Natural killer cell (primary cell): ENCODE measurements at regions of chr12 and their contacts with region 1.

Region 1: GRCh38 chr12:123995023-123995748 is 22.2 kb downstream of the ZNF664 start:
- DNase-seq: no peak
- ATAC-seq: peak; percentile 89 to 94 (median 89)
- H3K4me3 ChIP-seq: no peak overlapping the region
- H3K4me3 Mint-ChIP-seq: peak overlapping the region; percentile 55
- H3K27ac ChIP-seq: no peak overlapping the region
- H3K27ac Mint-ChIP-seq: peak overlapping the region; percentile 39 to 51
- H3K4me1 ChIP-seq: peaks cover 13% of the 10 kb centered on the region
- H3K4me1 Mint-ChIP-seq: peaks cover 54 to 64% of the 10 kb centered on the region in 2 donors
- H3K27me3 ChIP-seq: no peaks in the 10 kb centered on the region
- H3K27me3 Mint-ChIP-seq: no peaks in the 10 kb centered on the region
- CTCF ChIP-seq: no peak

Region 2: DNA sequence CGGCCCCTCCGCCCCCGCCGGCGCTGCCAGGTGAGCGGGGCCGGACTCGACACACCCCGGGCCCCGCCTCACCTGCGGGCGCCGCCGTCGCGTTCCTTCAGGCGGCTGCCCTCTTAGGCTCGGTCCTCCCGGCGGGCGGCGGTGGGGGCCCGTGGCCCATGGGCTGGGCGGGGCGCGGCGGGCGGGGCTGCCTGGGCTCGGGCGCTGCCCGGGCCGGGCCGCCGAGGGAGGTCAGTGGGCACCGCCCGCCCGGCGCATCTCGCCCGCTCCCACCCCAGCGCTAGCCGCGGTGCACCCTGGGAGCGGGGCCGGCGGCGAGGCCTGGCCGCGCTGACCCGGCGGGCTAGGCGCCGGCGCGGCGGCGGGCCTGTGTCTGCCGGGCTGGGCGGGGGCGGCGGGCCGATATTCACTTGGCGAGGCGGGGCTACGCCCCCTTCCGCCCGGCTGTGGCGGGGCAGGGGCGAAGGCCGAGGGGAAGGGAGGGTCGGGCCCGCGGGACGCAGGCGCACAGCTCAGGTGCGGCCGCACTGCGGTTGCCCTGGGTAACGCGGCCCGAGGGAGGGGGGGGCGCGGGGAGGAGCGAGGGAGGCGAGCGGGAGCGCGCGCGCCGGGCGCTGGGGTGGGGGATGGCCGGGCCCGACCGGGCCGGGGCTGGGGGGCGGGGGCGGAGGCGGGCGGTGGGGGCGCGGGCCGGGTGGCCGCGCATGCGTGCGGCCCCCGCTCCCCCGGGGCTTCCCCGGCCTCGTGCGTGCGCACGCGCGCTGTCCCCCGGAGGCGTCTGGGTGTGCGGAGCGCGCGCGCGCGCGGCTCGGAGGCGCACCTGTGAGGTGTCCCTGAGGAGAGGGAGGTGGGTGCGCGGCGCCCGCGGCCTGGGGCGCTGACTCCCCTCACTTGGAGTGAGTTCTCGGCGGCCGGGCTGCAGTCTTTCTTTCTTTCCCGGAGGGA is 22.5 kb before region 1 on chr12 and contains the starts of genes CCDC92 and ZNF664:
- intact Hi-C with region 1: loop called (anchors 2 kb)
- DNase-seq: peak; percentile 88 to 98
- ATAC-seq: peak; percentile 76 to 89 (median 83)
- H3K4me3 ChIP-seq: peak within 1 kb of the TSS; percentile 60
- H3K4me3 Mint-ChIP-seq: peak within 1 kb of the TSS; percentile 96
- H3K27ac ChIP-seq: peak within 1 kb of the TSS; percentile 59
- H3K27ac Mint-ChIP-seq: peak within 1 kb of the TSS; percentile 88 to 93
- H3K4me1 ChIP-seq: peaks cover 11% of the 10 kb centered on the region
- H3K4me1 Mint-ChIP-seq: peaks cover 36 to 39% of the 10 kb centered on the region in 2 donors
- H3K27me3 ChIP-seq: no peaks in the 10 kb centered on the region
- H3K27me3 Mint-ChIP-seq: no peaks in the 10 kb centered on the region
- CTCF ChIP-seq: no peak
- total RNA-seq, gene CCDC92: 37.6 to 42.4 (median 39.1) TPM
- total RNA-seq, gene ZNF664: 36.0 to 47.3 (median 46.9) TPM